ENCODE measurements at regions of chr3 and their contacts with region 1.

Region 1: DNA sequence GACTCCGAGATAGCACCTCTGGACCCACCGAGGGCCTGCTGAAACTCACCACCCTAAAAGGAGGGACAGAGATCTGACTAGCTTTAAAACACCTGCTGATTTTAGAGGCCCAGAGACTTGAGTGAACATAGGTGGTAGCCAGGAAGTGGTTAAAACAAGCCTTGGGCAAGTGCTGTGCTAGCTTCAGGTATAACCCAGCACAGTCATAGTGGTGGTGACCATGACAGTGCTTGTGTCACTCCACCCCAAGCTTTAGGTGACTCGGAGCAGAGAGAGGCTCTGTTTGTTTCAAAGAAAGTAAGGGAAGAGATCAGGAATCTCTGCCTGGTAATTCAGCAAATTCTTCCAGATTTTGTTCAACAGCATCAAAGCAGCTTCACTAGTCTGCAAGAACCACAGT is 641.1 kb upstream of the BCHE start:
- DNase-seq: no peak
- H3K4me3 Mint-ChIP-seq: no peak overlapping the region
- H3K27ac Mint-ChIP-seq: no peak overlapping the region
- H3K4me1 Mint-ChIP-seq: no peaks in the 10 kb centered on the region
- H3K27me3 Mint-ChIP-seq: no peaks in the 10 kb centered on the region

Region 2: DNA sequence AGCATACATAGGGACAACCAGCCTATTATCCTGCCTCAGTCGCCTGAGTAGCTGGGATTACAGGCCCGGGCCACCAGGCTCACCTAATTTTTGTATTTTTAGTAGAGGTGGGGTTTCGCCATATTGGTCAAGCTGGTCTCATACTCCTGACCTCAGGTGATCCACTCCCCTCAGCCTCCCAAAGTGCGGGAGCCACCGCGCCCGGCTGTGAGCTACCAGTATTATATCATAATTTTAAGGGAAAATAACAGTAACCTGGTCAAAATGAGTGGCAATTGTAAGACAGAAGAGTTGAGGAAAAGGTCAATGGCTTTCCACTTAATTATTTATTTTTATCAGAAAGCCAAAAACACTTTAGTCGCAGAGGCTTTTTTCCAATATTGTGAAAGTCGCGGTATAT is 11.5 kb after region 1 on chr3:
- intact Hi-C with region 1: loop called (anchors 2 kb)
- DNase-seq: no peak
- H3K4me3 Mint-ChIP-seq: no peak overlapping the region
- H3K27ac Mint-ChIP-seq: no peak overlapping the region
- H3K4me1 Mint-ChIP-seq: no peaks in the 10 kb centered on the region
- H3K27me3 Mint-ChIP-seq: no peaks in the 10 kb centered on the region